Activated T-helper 2 cell treated with anti-CD3 and anti-CD28 coated beads, Interferon-gamma antibody, Interleukin-2, Interleukin-4, amounts not matched to agents 10 μg/mL and 5 μg/mL and 100 μg/mL, durations not matched to agents 14 hours and 24 hours and 36 hours (primary cell): ENCODE measurements at regions of chr1 and their contacts with region 1.

Region 1: DNA sequence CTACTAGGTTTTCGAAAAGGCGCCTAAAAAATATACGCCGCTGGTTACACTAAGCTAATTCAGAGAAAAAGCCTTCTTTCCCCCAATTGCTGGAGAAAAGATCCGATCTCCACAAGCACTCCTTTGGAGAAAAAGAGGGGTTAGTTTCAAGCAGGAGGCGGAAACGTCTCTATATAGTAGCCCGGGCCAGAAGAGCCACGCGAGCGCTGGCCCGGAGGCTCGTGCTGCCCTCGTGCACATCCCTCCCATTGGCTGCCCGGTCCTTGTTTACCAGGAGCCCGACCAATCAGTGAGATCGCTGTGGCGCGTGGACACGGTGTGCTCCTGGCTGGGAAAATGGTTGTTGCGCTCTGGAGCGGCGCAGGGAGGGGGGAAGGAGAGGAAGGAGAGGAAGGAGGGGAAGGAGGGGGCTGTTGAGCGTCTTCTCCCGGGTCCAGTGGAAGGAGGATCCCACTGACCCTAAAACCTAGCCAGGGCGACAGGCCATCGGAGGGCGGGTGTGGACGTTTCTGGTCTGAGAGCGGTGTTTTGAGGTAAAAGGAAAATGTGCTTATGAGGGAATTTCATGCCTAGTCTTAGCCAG is at the start of gene TXNIP:
- DNase-seq: peak; percentile 89
- H3K4me3 Mint-ChIP-seq: peak within 1 kb of the TSS; percentile 85
- H3K27ac Mint-ChIP-seq: peak within 1 kb of the TSS; percentile 95
- H3K4me1 Mint-ChIP-seq: peaks cover 62% of the 10 kb centered on the region
- H3K27me3 Mint-ChIP-seq: no peaks in the 10 kb centered on the region
- total RNA-seq, gene TXNIP: 37.8 and 39.1 TPM in 2 replicates

Region 2: GRCh38 chr1:145858894-145859490 is 137.5 kb before region 1 on chr1 and contains the start of gene PIAS3:
- intact Hi-C with region 1: no loop called
- DNase-seq: peak; percentile 85
- H3K4me3 Mint-ChIP-seq: peak within 1 kb of the TSS; percentile 93
- H3K27ac Mint-ChIP-seq: peak within 1 kb of the TSS; percentile 89
- H3K4me1 Mint-ChIP-seq: peaks cover 11% of the 10 kb centered on the region
- H3K27me3 Mint-ChIP-seq: peaks cover 14% of the 10 kb centered on the region
- total RNA-seq, gene PIAS3: 21.1 and 21.3 TPM in 2 replicates

Region 3: GRCh38 chr1:145963995-145964901 is 32.3 kb before region 1 on chr1 and contains the starts of genes ANKRD34A and POLR3GL:
- intact Hi-C with region 1: loop called (anchors 5 kb)
- DNase-seq: peak; percentile 90
- H3K4me3 Mint-ChIP-seq: peak within 1 kb of the TSS; percentile 90
- H3K27ac Mint-ChIP-seq: peak within 1 kb of the TSS; percentile 81
- H3K4me1 Mint-ChIP-seq: peaks cover 42% of the 10 kb centered on the region
- H3K27me3 Mint-ChIP-seq: no peaks in the 10 kb centered on the region
- total RNA-seq, gene ANKRD34A: 4.1 TPM in 2 replicates
- total RNA-seq, gene POLR3GL: 13.2 and 14.7 TPM in 2 replicates

Region 4: DNA sequence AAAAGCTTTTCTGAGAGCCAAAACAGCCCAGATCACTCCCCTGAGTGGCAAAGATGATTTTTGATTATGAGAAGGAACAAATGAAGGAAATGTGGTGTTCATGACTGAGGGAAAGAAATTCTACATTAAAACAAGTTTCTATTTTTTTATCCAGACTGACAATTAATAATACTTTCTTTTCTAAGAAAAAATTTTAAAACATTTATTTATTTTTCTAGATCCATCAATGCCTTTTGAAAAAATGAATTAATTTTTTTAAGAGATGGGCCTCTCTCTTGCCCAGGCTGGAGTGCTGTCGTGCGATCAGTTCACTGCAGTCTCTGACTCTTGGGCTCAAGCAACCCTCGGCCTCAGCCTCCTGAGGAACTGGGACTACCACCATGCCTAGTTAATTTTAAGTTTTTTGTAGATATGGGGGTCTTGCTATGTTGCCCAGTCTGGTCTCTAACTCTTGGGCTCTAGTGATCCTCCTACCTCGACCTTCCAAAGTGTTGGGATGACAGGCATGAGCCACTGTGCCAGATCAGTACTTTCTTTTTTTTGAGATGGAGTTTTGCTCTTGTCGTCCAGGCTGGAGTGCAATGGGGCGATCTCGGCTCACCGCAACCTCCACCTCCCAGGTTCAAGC is 11.1 kb after region 1 on chr1:
- intact Hi-C with region 1: loop called (anchors 1 kb)
- DNase-seq: no peak
- H3K4me3 Mint-ChIP-seq: no peak overlapping the region
- H3K27ac Mint-ChIP-seq: peak overlapping the region; percentile 88
- H3K4me1 Mint-ChIP-seq: peaks cover 26% of the 10 kb centered on the region
- H3K27me3 Mint-ChIP-seq: no peaks in the 10 kb centered on the region

Region 5: DNA sequence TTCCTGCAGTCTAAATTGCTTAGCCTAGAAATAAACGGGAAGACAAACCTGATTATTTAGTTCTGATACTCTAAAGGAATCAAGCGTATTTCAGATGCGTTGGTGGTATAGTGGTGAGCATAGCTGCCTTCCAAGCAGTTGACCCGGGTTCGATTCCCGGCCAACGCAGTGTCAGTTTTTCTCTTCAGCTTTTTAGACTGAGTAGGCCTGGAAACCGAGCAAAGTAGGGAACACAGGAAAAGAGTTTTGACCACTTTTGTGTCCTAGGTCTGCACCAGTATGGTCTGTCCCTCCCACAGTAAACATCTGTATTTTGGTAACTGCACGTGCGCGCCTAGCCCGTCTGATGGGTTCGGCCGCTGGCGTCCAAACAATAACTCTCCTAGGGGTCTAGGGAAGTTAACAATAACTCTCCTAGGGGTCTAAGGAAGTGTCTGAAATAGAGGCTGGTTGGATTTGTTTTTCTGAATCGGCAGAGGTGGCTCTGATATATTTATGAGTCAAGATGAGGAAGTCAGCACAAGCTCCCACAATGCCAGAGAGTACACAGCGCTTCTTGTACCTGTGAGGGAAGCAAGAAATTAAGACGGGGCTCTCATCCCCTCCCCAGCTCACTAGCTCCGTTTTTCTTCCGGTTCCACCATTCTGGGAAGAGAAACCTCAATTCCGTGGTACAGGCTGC is 40.6 kb after region 1 on chr1:
- intact Hi-C with region 1: loop called (anchors 1 kb)
- DNase-seq: peak; percentile 71
- H3K4me3 Mint-ChIP-seq: peak overlapping the region; percentile 97
- H3K27ac Mint-ChIP-seq: peak overlapping the region; percentile 90
- H3K4me1 Mint-ChIP-seq: peaks cover 41% of the 10 kb centered on the region
- H3K27me3 Mint-ChIP-seq: peaks cover 7% of the 10 kb centered on the region